GM12878 (cell line): ENCODE measurements at regions of chr9 and their contacts with region 1.

Region 1: DNA sequence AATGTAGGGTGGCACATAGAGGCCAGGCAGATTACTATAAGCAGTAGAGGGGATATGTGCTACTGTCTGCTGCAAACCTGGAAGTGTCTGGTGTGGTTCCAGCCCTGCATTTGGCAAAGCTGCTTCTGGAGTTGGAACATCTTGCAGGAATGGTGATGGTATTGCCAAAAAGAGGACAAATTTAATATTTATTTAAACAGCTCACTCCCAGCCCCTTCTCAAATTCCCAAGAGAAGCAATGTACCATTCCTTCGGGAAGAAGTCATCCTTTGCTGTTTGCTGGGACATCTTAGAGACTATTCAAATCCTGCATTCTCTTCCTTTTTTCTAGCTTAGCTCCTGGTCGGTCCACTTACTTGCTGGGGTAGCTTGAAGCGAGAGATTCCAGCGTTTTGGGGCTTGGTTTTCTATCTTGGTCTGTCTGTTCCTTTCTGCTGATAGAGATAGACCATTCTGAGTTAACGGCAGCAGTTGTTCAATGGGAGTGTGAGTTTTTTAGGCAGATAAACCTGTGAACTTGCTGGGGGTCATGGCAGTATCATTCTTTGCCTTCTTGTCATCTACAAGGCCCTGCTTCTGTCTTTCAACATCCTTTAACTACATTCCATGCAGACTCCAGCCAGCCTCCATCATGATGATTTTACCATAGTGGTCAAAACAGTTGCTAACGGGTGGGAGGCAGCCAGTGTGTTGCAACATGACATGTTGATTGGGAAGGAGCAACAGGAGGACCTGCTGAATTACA is 69.9 kb downstream of the RCL1 start:
- DNase-seq: no peak
- ATAC-seq: no peak
- H3K4me3 ChIP-seq: no peak overlapping the region
- H3K27ac ChIP-seq: no peak overlapping the region
- H3K4me1 ChIP-seq: no peaks in the 10 kb centered on the region
- H3K27me3 ChIP-seq: no peaks in the 10 kb centered on the region
- CTCF ChIP-seq: no peak
- EP300 ChIP-seq: no peak
- POLR2A ChIP-seq: no peak
- RAD21 ChIP-seq: no peak

Region 2: DNA sequence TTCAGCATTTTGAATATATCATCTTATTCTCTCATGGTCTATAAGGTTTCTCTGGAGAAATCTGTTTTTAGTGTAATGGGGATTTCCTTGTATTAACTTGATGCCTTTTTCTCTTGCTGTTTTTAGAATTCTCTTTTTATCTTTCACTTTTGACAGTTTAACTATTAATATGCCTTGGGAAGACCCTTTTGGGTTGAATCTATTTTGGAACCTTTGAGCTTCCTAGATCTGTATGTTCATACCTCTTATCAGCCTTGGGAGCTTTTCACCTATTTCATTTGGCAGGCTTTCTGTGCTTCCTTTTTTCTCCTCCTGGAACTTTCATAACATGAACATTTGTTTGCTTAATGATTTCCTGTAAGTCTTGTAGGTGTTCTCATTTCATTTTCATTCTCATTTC is 47.8 kb before region 1 on chr9:
- CTCF ChIA-PET with region 1: no interaction called
- POLR2A ChIA-PET with region 1: no interaction called
- RAD21 ChIA-PET with region 1: no interaction called
- SMC1A ChIA-PET with region 1: no interaction called
- in situ Hi-C with region 1: no loop called
- intact Hi-C with region 1: no loop called
- DNase-seq: peak; percentile 77
- ATAC-seq: peak; percentile 74
- H3K4me3 ChIP-seq: peak overlapping the region; percentile 25; the same call in 1 of the 2 replicates
- H3K27ac ChIP-seq: peak overlapping the region; percentile 79
- H3K4me1 ChIP-seq: peaks cover 23% of the 10 kb centered on the region
- H3K27me3 ChIP-seq: no peaks in the 10 kb centered on the region
- CTCF ChIP-seq: no peak
- EP300 ChIP-seq: peak in 1 of 2 experiments; percentile 51; a peak in 2 of 4 replicates
- POLR2A ChIP-seq: no peak
- RAD21 ChIP-seq: no peak

Region 3: GRCh38 chr9:4849364-4849763 is 13.3 kb before region 1 on chr9:
- CTCF ChIA-PET with region 1: interaction called, 3 read pairs
- POLR2A ChIA-PET with region 1: interaction called, 3 read pairs
- RAD21 ChIA-PET with region 1: no interaction called
- SMC1A ChIA-PET with region 1: interaction called, 10 read pairs
- in situ Hi-C with region 1: no loop called
- intact Hi-C with region 1: no loop called
- DNase-seq: no peak
- ATAC-seq: no peak
- H3K4me3 ChIP-seq: no peak overlapping the region
- H3K27ac ChIP-seq: no peak overlapping the region
- H3K4me1 ChIP-seq: peaks cover 5% of the 10 kb centered on the region
- H3K27me3 ChIP-seq: no peaks in the 10 kb centered on the region
- CTCF ChIP-seq: peak; percentile 2 to 35 (median 22); a peak in 3 of 6 replicates
- EP300 ChIP-seq: no peak
- POLR2A ChIP-seq: no peak
- RAD21 ChIP-seq: peak; percentile 44